Natural killer cell (primary cell): ENCODE measurements at regions of chr22 and their contacts with region 1.

Region 1: GRCh38 chr22:50190182-50190940 is 4.6 kb downstream of the TRABD start:
- DNase-seq: peak; percentile 78 to 94
- ATAC-seq: peak; percentile 47 to 61 (median 57)
- H3K4me3 ChIP-seq: peak overlapping the region; percentile 72
- H3K4me3 Mint-ChIP-seq: peak overlapping the region; percentile 96
- H3K27ac ChIP-seq: peak overlapping the region; percentile 98
- H3K27ac Mint-ChIP-seq: peak overlapping the region; percentile 94 to 99
- H3K4me1 ChIP-seq: peaks cover 84% of the 10 kb centered on the region
- H3K4me1 Mint-ChIP-seq: peaks cover 40 to 54% of the 10 kb centered on the region in 2 donors
- H3K27me3 ChIP-seq: no peaks in the 10 kb centered on the region
- H3K27me3 Mint-ChIP-seq: no peaks in the 10 kb centered on the region
- CTCF ChIP-seq: no peak

Region 2: GRCh38 chr22:50148991-50149721 is 41.2 kb before region 1 on chr22:
- intact Hi-C with region 1: loop called (anchors 5 kb)
- DNase-seq: peak; percentile 71 to 91
- ATAC-seq: peak; percentile 91 to 99 (median 96)
- H3K4me3 ChIP-seq: no peak overlapping the region
- H3K4me3 Mint-ChIP-seq: no peak overlapping the region
- H3K27ac ChIP-seq: no peak overlapping the region
- H3K27ac Mint-ChIP-seq: no peak overlapping the region
- H3K4me1 ChIP-seq: peaks cover 11% of the 10 kb centered on the region
- H3K4me1 Mint-ChIP-seq: peaks cover 0 to 10% of the 10 kb centered on the region in 2 donors
- H3K27me3 ChIP-seq: no peaks in the 10 kb centered on the region
- H3K27me3 Mint-ChIP-seq: no peaks in the 10 kb centered on the region
- CTCF ChIP-seq: peak; percentile 90

Region 3: DNA sequence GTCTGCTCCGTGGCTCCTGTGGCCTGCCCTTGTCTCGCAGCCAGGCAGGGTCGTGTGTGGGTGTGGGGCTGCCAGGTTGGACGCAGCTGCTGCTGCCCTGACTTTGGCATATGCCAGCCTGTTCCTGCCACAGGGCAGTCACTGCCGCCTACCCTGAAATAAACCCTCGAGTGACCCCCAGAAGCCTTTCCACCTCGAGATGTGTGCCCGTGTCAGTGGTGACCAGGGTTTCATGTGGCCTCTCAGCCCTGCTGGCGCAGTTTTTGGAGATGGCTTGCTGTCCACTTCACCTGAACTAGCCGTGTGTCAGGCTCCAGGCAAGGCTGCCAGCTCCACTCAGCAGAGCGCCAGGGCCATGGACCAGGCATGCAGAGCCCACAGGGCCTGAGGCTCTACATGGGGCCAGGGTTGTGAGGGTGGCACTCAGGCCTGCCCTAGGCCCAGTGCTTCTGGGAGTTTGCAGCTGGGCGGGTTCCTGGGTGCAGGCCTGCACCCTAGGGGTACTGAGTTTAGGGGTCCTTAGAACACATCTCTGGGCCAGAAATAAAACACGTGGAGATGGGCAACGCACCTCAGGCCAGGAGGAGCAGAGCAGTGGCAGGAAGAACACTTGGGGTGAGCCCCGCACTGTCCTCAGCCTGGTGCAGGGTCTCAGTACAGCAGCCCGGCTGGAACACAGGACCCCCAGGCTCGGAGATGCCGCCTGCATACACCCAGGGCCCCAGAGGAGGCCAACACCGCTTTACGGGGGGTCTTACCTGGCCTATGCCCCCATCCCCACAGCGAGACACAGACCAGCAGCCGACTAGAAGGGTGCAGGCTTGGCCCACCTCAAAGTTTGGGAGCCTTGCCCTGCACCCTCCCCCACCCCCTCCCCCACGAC is 28.6 kb before region 1 on chr22:
- intact Hi-C with region 1: no loop called
- DNase-seq: no peak
- ATAC-seq: no peak
- H3K4me3 ChIP-seq: no peak overlapping the region
- H3K4me3 Mint-ChIP-seq: no peak overlapping the region
- H3K27ac ChIP-seq: no peak overlapping the region
- H3K27ac Mint-ChIP-seq: no peak overlapping the region
- H3K4me1 ChIP-seq: no peaks in the 10 kb centered on the region
- H3K4me1 Mint-ChIP-seq: no peaks in the 10 kb centered on the region
- H3K27me3 ChIP-seq: no peaks in the 10 kb centered on the region
- H3K27me3 Mint-ChIP-seq: peaks cover 8 to 12% of the 10 kb centered on the region in 2 donors
- CTCF ChIP-seq: no peak

Region 4: GRCh38 chr22:50200461-50201190 is 10.3 kb after region 1 on chr22 and contains the start of gene SELENOO:
- intact Hi-C with region 1: loop called (anchors 1 kb)
- DNase-seq: peak; percentile 91 to 94
- ATAC-seq: peak; percentile 91 to 95 (median 93)
- H3K4me3 ChIP-seq: peak within 1 kb of the TSS; percentile 44
- H3K4me3 Mint-ChIP-seq: peak within 1 kb of the TSS; percentile 87
- H3K27ac ChIP-seq: peak within 1 kb of the TSS; percentile 59
- H3K27ac Mint-ChIP-seq: peak within 1 kb of the TSS; percentile 46 to 65
- H3K4me1 ChIP-seq: peaks cover 24% of the 10 kb centered on the region
- H3K4me1 Mint-ChIP-seq: peaks cover 24 to 30% of the 10 kb centered on the region in 2 donors
- H3K27me3 ChIP-seq: no peaks in the 10 kb centered on the region
- H3K27me3 Mint-ChIP-seq: no peaks in the 10 kb centered on the region
- CTCF ChIP-seq: no peak
- total RNA-seq, gene SELENOO: 37.3 to 45.2 (median 37.6) TPM

Region 5: DNA sequence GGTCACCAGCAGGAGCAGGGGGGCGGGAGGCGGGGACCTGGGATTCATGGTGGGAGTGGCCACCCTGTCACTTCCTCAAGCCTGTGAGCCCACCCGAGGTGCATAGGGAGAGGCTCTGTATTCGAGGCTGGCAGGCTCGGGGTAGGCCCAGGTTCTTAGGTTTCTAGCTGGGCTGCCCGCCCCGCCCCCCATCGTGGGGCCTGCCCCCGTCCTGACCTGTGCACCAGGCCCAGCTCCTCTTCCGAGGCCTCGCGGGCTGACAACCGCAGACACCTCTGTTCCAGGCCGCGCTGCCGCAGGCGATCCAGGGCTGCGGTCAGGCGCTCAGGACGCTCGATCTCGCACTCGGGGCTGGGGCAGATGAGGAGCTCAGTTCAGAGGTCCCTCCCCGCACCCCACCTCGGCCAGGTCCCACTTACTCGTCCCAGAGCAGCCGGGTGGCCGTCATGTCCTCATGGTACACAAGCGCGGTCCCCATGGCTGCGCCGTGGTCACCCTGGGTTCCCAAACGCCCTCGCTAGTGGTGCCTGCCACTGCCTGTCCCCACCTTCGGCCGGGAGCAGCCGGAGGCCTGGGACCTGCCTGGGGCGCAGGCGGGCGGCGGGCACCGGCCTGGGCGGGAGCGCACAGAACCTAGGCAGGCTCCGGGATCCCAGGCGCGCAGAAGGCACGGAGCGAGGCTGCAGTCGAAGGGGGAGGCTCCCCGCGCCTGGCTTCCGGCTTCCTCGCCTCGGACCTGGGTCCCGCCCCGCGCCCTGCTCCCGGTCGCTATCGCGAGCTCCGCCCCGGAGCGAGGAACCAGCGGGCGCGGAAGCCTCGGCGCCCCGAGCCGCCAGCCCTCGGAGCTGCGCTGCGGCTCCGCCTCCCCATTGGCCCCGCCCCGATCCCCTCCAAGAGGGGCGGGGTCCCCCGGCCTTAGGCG is 60.5 kb after region 1 on chr22 and contains the start of gene HDAC10:
- intact Hi-C with region 1: no loop called
- DNase-seq: peak; percentile 60 to 90
- ATAC-seq: peak; percentile 58 to 64 (median 64)
- H3K4me3 ChIP-seq: peak within 1 kb of the TSS; percentile 80
- H3K4me3 Mint-ChIP-seq: peak within 1 kb of the TSS; percentile 74
- H3K27ac ChIP-seq: peak within 1 kb of the TSS; percentile 68
- H3K27ac Mint-ChIP-seq: peak within 1 kb of the TSS in 1 of 2 donors; percentile 62
- H3K4me1 ChIP-seq: peaks cover 52% of the 10 kb centered on the region
- H3K4me1 Mint-ChIP-seq: peaks cover 0 to 17% of the 10 kb centered on the region in 2 donors
- H3K27me3 ChIP-seq: no peaks in the 10 kb centered on the region
- H3K27me3 Mint-ChIP-seq: no peaks in the 10 kb centered on the region
- CTCF ChIP-seq: no peak
- total RNA-seq, gene HDAC10: 112 to 131 (median 123) TPM